H1 (cell line): ENCODE measurements at regions of chr1 and their contacts with region 1.

Region 1: DNA sequence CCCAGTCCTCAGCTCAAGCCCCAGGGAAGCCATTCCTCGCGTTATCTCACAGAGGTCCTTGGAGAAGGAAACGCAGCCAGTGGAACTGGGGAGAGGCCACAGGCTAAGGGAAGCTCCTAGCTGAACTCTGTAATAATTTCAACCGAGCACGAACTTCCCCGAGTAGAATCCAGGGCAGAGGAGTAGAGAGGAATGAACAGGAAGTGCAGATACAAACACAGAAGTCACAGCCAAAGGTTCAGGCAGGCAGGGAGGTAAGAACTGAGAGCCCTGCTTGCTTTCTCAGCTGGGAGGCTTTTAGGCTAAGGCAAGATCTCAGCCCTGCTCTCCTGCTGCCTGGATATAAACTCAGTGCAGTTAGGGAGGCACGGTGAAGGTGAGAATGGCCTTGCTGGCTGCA is 23.7 kb downstream of the WARS2 start:
- DNase-seq: peak in 1 of 2 experiments; percentile 46
- H3K4me3 ChIP-seq: no peak overlapping the region
- H3K27ac ChIP-seq: no peak overlapping the region
- H3K4me1 ChIP-seq: peaks cover 0 to 6% (median 2%) of the 10 kb centered on the region in 4 experiments; a peak in 2 of 7 replicates
- H3K27me3 ChIP-seq: no peaks in the 10 kb centered on the region
- CTCF ChIP-seq: no peak
- EP300 ChIP-seq: no peak
- POLR2A ChIP-seq: no peak
- RAD21 ChIP-seq: no peak

Region 2: GRCh38 chr1:119032986-119033385 is 83.7 kb before region 1 on chr1:
- CTCF ChIA-PET with region 1: no interaction called
- POLR2A ChIA-PET with region 1: no interaction called
- DNase-seq: no peak
- H3K4me3 ChIP-seq: no peak overlapping the region
- H3K27ac ChIP-seq: no peak overlapping the region
- H3K4me1 ChIP-seq: no peaks in the 10 kb centered on the region
- H3K27me3 ChIP-seq: no peaks in the 10 kb centered on the region
- CTCF ChIP-seq: no peak
- EP300 ChIP-seq: no peak
- POLR2A ChIP-seq: no peak
- RAD21 ChIP-seq: no peak

Region 3: DNA sequence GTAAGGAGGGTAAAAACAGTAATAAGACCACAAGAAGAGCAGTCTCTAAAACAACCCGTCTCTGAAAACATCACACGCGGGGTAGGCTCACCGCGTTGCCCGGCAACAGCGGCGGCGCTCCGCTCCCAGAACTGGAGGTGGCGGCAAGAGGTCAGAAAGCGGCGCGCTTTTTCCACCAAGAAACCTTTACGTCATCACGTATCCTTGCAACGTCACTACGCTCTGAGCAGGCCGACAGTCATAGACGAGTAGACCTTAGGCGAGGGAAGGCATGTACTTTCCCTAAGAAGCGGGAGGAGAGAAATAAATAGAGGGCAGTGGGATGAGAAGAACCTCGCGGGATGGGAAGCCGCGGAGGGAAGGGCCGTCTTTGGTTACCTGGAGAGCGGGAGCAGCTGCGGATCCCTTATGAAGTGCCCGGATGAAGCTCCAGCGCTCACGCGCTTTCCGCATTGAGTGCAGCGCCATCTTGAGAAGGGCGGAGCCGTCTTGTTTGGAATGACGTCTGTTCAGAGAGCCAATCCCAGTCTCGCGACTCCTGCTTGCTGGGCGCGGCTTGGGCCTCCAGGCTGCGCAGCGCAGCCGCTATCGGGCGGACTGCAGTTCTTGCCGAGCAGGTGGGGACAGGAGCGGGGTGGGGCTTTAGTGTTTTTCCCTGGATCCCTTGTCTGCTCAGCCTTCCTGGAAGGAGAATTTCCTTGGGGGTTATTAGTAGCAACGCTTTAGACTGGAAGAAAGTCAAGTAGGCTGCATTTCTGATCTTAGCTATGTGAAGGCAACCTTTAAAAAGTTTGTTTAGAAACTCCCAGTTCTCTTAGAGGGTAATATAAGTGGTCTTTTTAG is 23.7 kb after region 1 on chr1 and contains the start of gene WARS2:
- CTCF ChIA-PET with region 1: no interaction called
- POLR2A ChIA-PET with region 1: interaction called, 10 read pairs
- DNase-seq: peak; percentile 91 to 95
- H3K4me3 ChIP-seq: peak within 1 kb of the TSS; percentile 62 to 86 (median 76)
- H3K27ac ChIP-seq: peak within 1 kb of the TSS; percentile 98
- H3K4me1 ChIP-seq: peaks cover 0 to 3% (median 3%) of the 10 kb centered on the region in 4 experiments; a peak in 3 of 7 replicates
- H3K27me3 ChIP-seq: no peaks in the 10 kb centered on the region
- CTCF ChIP-seq: no peak
- EP300 ChIP-seq: no peak
- POLR2A ChIP-seq: peak; percentile 91 to 95
- RAD21 ChIP-seq: no peak; a peak in 1 of 4 replicates
- total RNA-seq, gene WARS2: 12.9 and 13.8 TPM in 2 replicates

Region 4: DNA sequence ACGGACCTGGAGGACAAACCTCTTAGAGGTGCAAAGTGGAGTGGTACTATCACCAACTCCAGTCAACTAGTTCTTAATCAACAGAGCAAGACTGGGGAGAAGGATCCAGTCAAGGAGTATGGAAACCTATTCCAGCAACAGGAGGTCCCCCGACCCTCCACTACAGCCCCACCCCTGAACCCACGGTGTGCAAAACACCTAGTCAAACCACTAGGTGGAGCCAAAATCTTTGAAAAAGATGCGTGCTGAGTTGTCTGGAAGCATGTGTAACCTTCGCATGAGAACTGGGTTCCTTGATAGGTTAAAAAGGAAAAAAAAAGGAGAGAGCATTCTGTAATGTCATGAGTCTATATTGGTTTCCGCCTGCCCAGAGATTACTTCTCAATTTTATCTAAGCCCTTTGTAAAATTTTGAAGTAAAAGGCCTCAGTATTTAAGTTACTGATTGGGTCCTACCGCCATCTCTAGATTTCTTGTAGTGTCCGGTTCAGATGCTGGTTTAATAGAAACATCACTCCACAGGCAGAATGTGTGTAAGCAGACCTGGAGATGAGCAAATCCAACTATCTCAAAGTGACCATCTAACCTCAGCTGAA is 170.0 kb after region 1 on chr1:
- CTCF ChIA-PET with region 1: no interaction called
- POLR2A ChIA-PET with region 1: no interaction called
- DNase-seq: peak in 1 of 2 experiments; percentile 66
- H3K4me3 ChIP-seq: no peak overlapping the region
- H3K27ac ChIP-seq: no peak overlapping the region
- H3K4me1 ChIP-seq: no peaks in the 10 kb centered on the region
- H3K27me3 ChIP-seq: no peaks in the 10 kb centered on the region
- CTCF ChIP-seq: peak; percentile 61 to 84 (median 79)
- EP300 ChIP-seq: no peak
- POLR2A ChIP-seq: no peak
- RAD21 ChIP-seq: peak; percentile 92 to 93